MCF 10A (cell line): ENCODE measurements at regions of chr6 and their contacts with region 1.

Region 1: DNA sequence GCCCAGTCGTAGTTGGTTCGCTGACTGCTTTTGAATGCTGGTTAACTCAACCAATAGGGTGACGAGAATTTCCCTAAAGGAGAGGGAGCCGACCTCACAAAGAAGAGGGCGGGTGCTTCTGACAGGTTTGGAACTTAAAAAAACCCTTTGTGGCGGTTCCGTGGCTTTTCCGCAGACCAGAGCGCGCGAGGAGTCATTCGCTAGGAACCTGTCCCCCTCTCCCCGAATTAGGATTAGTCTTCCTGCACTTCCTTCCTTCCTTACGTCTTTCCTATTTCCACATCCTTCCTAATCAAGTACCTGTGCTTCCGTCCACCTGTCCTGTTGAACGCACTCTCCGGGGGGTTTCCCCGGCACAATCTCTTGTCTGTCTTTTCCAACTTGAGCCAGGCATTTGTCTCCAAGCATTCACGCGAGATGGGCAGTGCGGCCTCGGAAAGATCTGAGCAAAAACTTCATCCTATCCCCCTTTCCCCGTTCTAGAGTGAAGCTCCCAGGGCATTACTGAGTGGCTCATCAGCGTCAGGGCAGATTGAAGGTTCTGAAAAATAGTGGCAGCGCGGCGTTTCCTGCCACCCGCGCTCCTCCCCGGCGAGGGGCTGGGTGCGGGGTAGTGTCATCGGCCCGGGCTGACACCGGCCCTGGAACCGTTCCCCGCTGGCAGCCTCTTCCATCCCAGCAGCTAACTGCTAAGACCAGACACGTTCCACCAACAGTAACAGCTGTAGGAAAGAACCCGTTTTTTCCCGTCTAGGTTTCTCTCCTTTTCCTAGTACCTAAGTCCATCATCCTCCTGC is 1.5 kb upstream of the STXBP5 start:
- DNase-seq: peak; percentile 98
- H3K4me3 Mint-ChIP-seq: peak overlapping the region; percentile 83
- H3K27ac Mint-ChIP-seq: peak overlapping the region; percentile 99
- H3K4me1 Mint-ChIP-seq: peaks cover 7% of the 10 kb centered on the region
- H3K27me3 Mint-ChIP-seq: no peaks in the 10 kb centered on the region
- CTCF ChIP-seq: no peak

Region 2: DNA sequence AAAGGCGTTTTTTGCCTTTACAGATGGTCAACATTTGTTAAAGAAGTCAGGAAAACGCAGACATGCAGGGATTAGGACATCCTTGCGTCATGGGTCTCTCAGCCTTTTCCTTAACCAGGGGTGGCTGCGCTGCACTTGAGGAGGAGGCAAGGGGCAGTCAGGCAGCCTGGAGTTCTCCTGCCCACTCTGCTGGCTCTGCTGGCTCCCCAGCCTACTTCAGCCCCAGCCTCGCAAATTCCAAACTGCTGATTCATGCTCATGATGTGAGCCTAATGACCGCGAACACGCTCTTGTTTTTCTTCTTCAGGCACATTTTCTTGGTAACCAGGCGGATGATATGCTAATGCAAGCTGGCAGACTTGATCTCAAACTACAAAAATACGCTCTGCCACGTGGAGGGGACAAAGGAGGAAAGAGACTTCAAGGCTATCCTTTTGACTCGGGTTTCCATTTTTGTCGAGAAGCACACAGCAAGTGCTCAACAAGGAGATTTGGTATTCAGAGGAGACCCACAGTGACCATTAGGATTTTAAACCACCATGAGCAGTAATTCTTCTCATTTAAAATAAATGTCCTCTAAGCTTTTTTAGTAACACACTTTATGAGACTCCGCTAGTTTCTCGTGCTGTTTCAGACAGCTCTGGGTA is 288.7 kb before region 1 on chr6:
- CTCF ChIA-PET with region 1: interaction called, 6 read pairs
- POLR2A ChIA-PET with region 1: interaction called, 95 read pairs
- intact Hi-C with region 1: loop called (anchors 1 kb)
- DNase-seq: peak; percentile 97
- H3K4me3 Mint-ChIP-seq: peak overlapping the region; percentile 68
- H3K27ac Mint-ChIP-seq: peak overlapping the region; percentile 96
- H3K4me1 Mint-ChIP-seq: peaks cover 40% of the 10 kb centered on the region
- H3K27me3 Mint-ChIP-seq: no peaks in the 10 kb centered on the region
- CTCF ChIP-seq: no peak

Region 3: GRCh38 chr6:147135211-147135681 is 67.5 kb before region 1 on chr6:
- CTCF ChIA-PET with region 1: no interaction called
- POLR2A ChIA-PET with region 1: interaction called, 25 read pairs
- intact Hi-C with region 1: loop called (anchors 1 kb)
- DNase-seq: peak; percentile 99
- H3K4me3 Mint-ChIP-seq: no peak overlapping the region
- H3K27ac Mint-ChIP-seq: peak overlapping the region; percentile 53
- H3K4me1 Mint-ChIP-seq: peaks cover 18% of the 10 kb centered on the region
- H3K27me3 Mint-ChIP-seq: no peaks in the 10 kb centered on the region
- CTCF ChIP-seq: no peak

Region 4: GRCh38 chr6:147170269-147170668 is 32.4 kb before region 1 on chr6:
- CTCF ChIA-PET with region 1: no interaction called
- POLR2A ChIA-PET with region 1: interaction called, 39 read pairs
- intact Hi-C with region 1: loop called (anchors 1 kb)
- DNase-seq: peak; percentile 84
- H3K4me3 Mint-ChIP-seq: no peak overlapping the region
- H3K27ac Mint-ChIP-seq: peak overlapping the region; percentile 94
- H3K4me1 Mint-ChIP-seq: peaks cover 16% of the 10 kb centered on the region
- H3K27me3 Mint-ChIP-seq: no peaks in the 10 kb centered on the region
- CTCF ChIP-seq: no peak

Region 5: GRCh38 chr6:147192302-147192771 is 10.4 kb before region 1 on chr6:
- CTCF ChIA-PET with region 1: interaction called, 5 read pairs
- POLR2A ChIA-PET with region 1: interaction called, 10 read pairs
- intact Hi-C with region 1: no loop called
- DNase-seq: peak; percentile 9
- H3K4me3 Mint-ChIP-seq: no peak overlapping the region
- H3K27ac Mint-ChIP-seq: peak overlapping the region; percentile 29
- H3K4me1 Mint-ChIP-seq: peaks cover 20% of the 10 kb centered on the region
- H3K27me3 Mint-ChIP-seq: no peaks in the 10 kb centered on the region
- CTCF ChIP-seq: no peak

Region 6: GRCh38 chr6:147222160-147222838 is 19.6 kb after region 1 on chr6:
- CTCF ChIA-PET with region 1: no interaction called
- POLR2A ChIA-PET with region 1: interaction called, 48 read pairs
- intact Hi-C with region 1: no loop called
- DNase-seq: peak; percentile 24
- H3K4me3 Mint-ChIP-seq: no peak overlapping the region
- H3K27ac Mint-ChIP-seq: peak overlapping the region; percentile 37
- H3K4me1 Mint-ChIP-seq: peaks cover 39% of the 10 kb centered on the region
- H3K27me3 Mint-ChIP-seq: no peaks in the 10 kb centered on the region
- CTCF ChIP-seq: peak; percentile 27

Region 7: DNA sequence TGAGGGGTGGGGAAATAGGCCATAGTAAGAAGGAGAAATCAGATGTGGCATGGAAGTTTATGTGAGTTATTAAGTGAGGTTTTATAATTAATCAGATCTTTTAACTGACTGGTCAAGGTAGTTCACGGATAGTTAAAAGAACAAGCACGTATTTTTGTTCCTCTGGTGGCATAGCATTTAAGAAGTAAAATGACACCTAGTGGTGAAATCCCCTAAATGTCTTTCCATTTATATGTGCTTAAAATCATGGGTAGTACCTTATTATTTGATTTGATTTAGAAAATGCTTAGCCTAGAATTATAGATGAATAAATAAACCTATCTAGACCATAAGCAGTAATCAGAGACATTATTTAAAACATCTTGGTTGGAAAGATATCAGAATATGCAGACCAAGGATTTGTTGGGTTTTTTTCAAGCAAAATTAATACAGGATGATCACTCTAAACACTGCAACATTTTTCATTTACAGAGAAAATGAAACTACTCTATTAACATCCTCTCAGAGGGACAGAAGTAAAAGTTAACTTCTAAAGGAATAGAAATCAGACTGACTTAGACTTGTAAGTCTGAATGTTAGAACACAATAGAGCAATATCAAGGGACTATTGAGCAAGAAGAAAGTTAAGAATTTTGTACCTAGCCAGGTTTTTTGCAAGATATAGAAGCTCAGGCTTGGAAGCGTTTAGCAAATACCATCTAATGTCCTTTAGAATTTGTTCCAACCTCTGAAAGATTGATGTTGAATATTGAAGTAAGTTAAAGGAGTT is 82.6 kb after region 1 on chr6:
- CTCF ChIA-PET with region 1: interaction called, 3 read pairs
- POLR2A ChIA-PET with region 1: interaction called, 8 read pairs
- intact Hi-C with region 1: loop called (anchors 1 kb)
- DNase-seq: peak; percentile 59
- H3K4me3 Mint-ChIP-seq: no peak overlapping the region
- H3K27ac Mint-ChIP-seq: peak overlapping the region; percentile 73
- H3K4me1 Mint-ChIP-seq: peaks cover 31% of the 10 kb centered on the region
- H3K27me3 Mint-ChIP-seq: no peaks in the 10 kb centered on the region
- CTCF ChIP-seq: peak; percentile 38